HepG2 (cell line): ENCODE measurements at regions of chr9 and their contacts with region 1.

Region 1: DNA sequence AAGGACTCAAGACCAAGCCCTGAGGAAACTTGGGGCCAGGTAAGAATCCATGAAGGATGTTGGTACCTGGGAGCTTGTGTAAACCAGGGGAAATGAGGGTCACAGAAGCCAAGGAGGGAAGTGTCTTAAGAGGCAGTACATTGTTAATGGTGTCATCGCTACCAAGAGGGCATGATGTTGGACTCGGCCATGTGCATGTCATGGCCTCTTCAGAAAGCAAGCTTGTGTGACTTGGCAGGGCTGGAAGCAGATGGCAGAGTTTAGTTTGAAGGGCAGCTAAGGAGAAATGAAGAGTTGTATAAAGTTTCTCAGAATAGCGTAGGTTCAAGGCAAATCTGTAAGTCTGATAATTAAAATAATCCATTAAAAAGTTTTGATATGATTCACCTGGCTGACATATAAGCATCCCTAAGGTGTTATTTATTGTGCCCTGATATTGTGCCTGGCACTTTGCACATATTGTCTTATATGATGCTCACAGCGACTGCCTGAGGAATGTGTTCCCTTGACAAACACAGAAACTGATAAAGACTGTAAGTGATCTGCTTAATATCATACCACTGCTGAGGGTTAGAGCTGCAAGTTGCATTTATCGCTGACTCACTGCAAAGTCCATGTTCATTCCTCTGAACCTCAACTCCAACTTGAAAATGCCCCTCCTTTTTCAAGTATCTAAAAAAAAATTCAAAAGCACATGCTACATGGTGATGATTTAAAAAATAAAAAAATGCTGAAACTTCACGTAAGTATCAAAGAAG is 81.3 kb upstream of the PTPN3 start:
- DNase-seq: no peak
- ATAC-seq: no peak
- H3K4me3 ChIP-seq: no peak overlapping the region
- H3K27ac ChIP-seq: no peak overlapping the region
- H3K4me1 ChIP-seq: no peaks in the 10 kb centered on the region
- H3K27me3 ChIP-seq: no peaks in the 10 kb centered on the region
- CTCF ChIP-seq: no peak
- EP300 ChIP-seq: no peak
- POLR2A ChIP-seq: no peak
- RAD21 ChIP-seq: no peak

Region 2: DNA sequence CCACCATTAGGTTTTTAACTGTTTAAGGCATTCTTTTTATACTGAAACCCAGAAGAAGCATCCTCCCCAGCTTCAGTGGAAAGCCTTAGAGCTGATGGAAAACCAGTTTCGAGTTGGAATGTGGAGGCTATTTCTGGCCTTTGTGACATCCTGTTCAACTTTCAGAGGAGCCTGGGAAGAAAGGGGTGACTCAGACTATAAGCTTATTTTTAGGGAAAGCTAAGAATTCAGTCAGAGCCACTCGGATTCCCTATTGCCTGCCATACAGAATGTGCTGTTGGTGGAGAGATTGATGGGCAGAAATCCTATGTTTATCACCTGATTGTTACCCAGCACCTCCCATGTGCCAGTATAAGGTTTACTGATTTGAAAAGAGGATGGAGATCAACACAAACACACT is 220.4 kb after region 1 on chr9:
- CTCF ChIA-PET with region 1: no interaction called
- POLR2A ChIA-PET with region 1: no interaction called
- in situ Hi-C with region 1: no loop called
- intact Hi-C with region 1: no loop called
- DNase-seq: no peak
- ATAC-seq: no peak
- H3K4me3 ChIP-seq: no peak overlapping the region
- H3K27ac ChIP-seq: no peak overlapping the region
- H3K4me1 ChIP-seq: peaks cover 3% of the 10 kb centered on the region
- H3K27me3 ChIP-seq: no peaks in the 10 kb centered on the region
- CTCF ChIP-seq: no peak
- EP300 ChIP-seq: no peak
- POLR2A ChIP-seq: no peak
- RAD21 ChIP-seq: no peak

Region 3: GRCh38 chr9:109887079-109887478 is 307.7 kb after region 1 on chr9:
- CTCF ChIA-PET with region 1: no interaction called
- POLR2A ChIA-PET with region 1: no interaction called
- in situ Hi-C with region 1: no loop called
- intact Hi-C with region 1: loop called (anchors 5 kb)
- DNase-seq: no peak
- ATAC-seq: no peak
- H3K4me3 ChIP-seq: no peak overlapping the region
- H3K27ac ChIP-seq: no peak overlapping the region
- H3K4me1 ChIP-seq: no peaks in the 10 kb centered on the region
- H3K27me3 ChIP-seq: peaks cover 0 to 1% of the 10 kb centered on the region in 2 experiments; a peak in 1 of 5 replicates
- CTCF ChIP-seq: no peak
- EP300 ChIP-seq: no peak
- POLR2A ChIP-seq: no peak
- RAD21 ChIP-seq: no peak